Kidney (tissue), 22 donors: ENCODE measurements at regions of chr3 and their contacts with region 1.

Region 1: GRCh38 chr3:157618075-157618760 is 115.0 kb upstream of the VEPH1 start:
- DNase-seq: peak in 2 of 5 donors; percentile 80 to 81
- H3K4me3 ChIP-seq: no peak overlapping the region
- H3K27ac ChIP-seq: no peak overlapping the region
- H3K4me1 ChIP-seq: no peaks in the 10 kb centered on the region
- H3K27me3 ChIP-seq: no peaks in the 10 kb centered on the region
- CTCF ChIP-seq: peak; percentile 68

Region 2: GRCh38 chr3:157447026-157447694 is 171.1 kb before region 1 on chr3:
- intact Hi-C with region 1: no loop called
- DNase-seq: peak in 2 of 5 donors; percentile 24 to 54
- H3K4me3 ChIP-seq: no peak overlapping the region
- H3K27ac ChIP-seq: no peak overlapping the region
- H3K4me1 ChIP-seq: no peaks in the 10 kb centered on the region
- H3K27me3 ChIP-seq: no peaks in the 10 kb centered on the region
- CTCF ChIP-seq: peak; percentile 39

Region 3: DNA sequence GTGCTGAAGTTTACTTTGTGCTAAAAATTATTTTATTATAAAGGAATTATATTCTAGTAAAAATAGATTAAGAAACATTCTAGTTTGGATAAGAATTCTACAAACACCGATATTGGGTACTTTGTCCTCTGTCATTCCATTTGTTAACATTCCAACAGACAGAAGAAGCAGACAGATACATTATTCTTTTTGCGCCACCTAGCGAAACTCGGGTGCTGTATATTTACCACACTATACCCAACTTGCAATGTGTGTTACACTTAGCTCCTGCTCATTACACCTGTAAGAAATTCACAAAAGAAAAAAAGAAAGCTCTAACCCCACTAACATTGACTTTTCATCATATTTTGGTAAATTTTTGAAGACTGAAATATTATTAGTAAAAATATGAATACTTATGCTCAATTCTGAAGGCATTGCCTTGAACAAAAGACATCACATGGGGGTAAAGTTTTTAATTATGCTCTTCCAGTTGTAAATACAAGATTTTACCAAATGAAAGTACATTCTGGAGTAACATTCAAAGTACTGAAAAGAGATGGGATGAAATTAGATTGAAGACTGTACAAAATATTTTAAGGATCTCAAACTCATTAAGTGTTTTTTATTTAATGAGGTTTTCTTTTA is 816.3 kb after region 1 on chr3:
- intact Hi-C with region 1: loop called (anchors 10 kb)
- DNase-seq: peak in 4 of 5 donors; percentile 43 to 88 (median 73)
- H3K4me3 ChIP-seq: no peak overlapping the region
- H3K27ac ChIP-seq: no peak overlapping the region
- H3K4me1 ChIP-seq: no peaks in the 10 kb centered on the region
- H3K27me3 ChIP-seq: no peaks in the 10 kb centered on the region
- CTCF ChIP-seq: peak; percentile 66